HAP-1 (cell line): ENCODE measurements at regions of chr15 and their contacts with region 1.

Region 1: GRCh38 chr15:42920519-42921227 is at the start of gene TTBK2:
- DNase-seq: peak; percentile 97 to 99
- H3K4me3 ChIP-seq: peak within 1 kb of the TSS; percentile 87
- H3K4me1 ChIP-seq: peaks cover 12% of the 10 kb centered on the region
- H3K27me3 ChIP-seq: no peaks in the 10 kb centered on the region

Region 2: DNA sequence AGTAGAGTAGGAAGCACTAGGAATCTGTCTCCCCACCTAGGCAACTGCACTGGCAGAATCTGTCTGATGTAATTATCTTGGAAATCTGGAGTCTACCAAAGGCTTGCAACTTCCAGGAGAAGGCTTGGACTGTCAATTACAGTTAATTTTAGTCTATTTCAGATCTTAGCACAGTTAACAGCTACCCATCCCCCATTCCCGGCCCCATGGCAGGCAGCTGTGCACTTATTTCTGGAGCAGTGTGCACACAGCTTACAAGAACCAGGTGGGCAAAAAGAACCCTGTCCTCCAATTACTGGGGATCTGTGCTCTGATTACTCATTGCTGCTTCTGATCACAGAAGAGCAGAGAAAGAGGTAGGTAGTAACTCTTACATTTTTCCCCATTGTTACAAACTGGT is 171.4 kb before region 1 on chr15:
- in situ Hi-C with region 1: loop called (anchors 5 kb)
- DNase-seq: no peak
- H3K4me3 ChIP-seq: no peak overlapping the region
- H3K4me1 ChIP-seq: no peaks in the 10 kb centered on the region
- H3K27me3 ChIP-seq: no peaks in the 10 kb centered on the region

Region 3: DNA sequence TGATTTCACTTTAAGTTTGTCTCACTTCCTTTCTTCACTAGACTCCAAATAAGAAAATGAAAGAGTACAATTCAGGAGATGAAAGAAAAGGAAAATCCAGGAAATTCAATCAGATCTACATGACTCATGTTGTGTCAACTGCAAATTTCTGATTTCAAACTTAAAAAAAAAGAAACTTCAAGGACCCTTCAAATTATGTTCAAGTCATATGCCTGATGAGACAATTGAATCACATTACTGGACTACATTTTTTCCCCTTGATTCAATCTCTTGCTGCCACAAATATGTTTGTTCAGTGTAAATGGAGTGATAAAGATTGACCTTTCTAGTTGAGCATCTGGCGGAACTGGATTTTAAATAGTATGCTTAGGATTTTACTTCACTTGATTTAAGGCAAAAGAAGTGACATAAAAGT is 1237.0 kb after region 1 on chr15:
- in situ Hi-C with region 1: no loop called
- DNase-seq: no peak
- H3K4me3 ChIP-seq: no peak overlapping the region
- H3K4me1 ChIP-seq: no peaks in the 10 kb centered on the region
- H3K27me3 ChIP-seq: no peaks in the 10 kb centered on the region